GM12878 (cell line): ENCODE measurements at regions of chr17 and their contacts with region 1.

Region 1: DNA sequence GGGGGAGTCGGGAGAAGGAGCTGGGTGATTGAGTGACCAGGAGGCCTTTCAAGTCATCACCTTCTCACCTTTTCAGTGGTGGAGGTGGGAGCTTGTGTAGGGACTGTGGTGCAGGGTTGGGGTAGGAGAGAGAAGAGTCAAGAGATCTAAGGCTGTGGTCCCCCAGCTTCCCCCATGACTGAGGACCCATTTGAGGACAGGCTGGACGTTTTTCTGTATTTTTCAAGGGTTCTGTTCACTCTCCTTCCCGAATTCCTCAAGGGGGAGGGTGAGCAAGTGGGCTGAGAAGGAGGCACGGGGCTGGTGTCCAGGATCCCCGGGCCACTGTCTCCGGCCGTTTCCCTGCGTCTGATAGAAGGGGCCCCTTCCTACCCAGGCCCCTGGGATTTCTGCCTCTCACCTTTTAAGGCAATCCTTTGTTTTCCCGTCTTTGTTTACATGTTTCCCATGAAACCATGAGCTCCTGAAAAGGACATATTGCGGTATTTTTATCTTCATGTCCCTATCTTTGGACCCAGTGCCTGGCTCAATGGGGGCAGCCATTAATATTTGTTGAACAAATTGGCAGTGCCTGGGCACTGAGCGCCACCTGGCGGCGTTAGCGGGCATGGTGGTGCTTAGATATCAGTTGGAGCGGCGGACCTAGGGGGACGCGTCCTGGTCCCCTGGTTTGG is 9.2 kb upstream of the CD300A start:
- DNase-seq: no peak
- ATAC-seq: peak; percentile 61
- H3K4me3 ChIP-seq: no peak overlapping the region
- H3K27ac ChIP-seq: no peak overlapping the region
- H3K4me1 ChIP-seq: peaks cover 16% of the 10 kb centered on the region
- H3K27me3 ChIP-seq: peaks cover 0 to 2% of the 10 kb centered on the region in 2 experiments; a peak in 2 of 4 replicates
- CTCF ChIP-seq: peak; percentile 87 to 96 (median 94)
- EP300 ChIP-seq: no peak
- POLR2A ChIP-seq: no peak
- RAD21 ChIP-seq: peak; percentile 98

Region 2: DNA sequence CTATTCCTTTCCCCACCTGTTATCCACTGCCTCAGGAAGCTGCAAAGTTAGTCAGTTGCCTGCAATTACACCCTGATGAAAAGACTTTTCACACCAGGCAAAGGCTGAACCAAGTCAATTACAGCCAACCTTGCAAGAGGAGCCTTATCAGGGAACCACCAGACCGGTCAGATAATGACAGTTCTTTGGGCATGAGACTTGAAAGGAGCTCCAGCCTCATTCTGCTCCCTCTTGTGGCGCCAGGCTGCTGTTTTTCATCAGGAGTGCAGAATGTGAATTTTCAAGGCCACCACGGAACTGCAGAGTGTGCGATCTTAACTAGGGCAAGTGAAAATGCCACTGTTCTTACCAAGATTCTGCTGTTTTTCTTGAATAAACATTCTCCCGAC is 160.7 kb before region 1 on chr17:
- CTCF ChIA-PET with region 1: interaction called, 7 read pairs
- POLR2A ChIA-PET with region 1: no interaction called
- RAD21 ChIA-PET with region 1: interaction called, 5 read pairs
- SMC1A ChIA-PET with region 1: interaction called, 3 read pairs
- in situ Hi-C with region 1: no loop called
- intact Hi-C with region 1: loop called (anchors 2 kb)
- DNase-seq: no peak
- ATAC-seq: peak; percentile 83
- H3K4me3 ChIP-seq: no peak overlapping the region
- H3K27ac ChIP-seq: no peak overlapping the region
- H3K4me1 ChIP-seq: no peaks in the 10 kb centered on the region
- H3K27me3 ChIP-seq: no peaks in the 10 kb centered on the region
- CTCF ChIP-seq: peak; percentile 43 to 72 (median 56); a peak in 4 of 6 replicates
- EP300 ChIP-seq: no peak
- POLR2A ChIP-seq: no peak
- RAD21 ChIP-seq: peak; percentile 47

Region 3: DNA sequence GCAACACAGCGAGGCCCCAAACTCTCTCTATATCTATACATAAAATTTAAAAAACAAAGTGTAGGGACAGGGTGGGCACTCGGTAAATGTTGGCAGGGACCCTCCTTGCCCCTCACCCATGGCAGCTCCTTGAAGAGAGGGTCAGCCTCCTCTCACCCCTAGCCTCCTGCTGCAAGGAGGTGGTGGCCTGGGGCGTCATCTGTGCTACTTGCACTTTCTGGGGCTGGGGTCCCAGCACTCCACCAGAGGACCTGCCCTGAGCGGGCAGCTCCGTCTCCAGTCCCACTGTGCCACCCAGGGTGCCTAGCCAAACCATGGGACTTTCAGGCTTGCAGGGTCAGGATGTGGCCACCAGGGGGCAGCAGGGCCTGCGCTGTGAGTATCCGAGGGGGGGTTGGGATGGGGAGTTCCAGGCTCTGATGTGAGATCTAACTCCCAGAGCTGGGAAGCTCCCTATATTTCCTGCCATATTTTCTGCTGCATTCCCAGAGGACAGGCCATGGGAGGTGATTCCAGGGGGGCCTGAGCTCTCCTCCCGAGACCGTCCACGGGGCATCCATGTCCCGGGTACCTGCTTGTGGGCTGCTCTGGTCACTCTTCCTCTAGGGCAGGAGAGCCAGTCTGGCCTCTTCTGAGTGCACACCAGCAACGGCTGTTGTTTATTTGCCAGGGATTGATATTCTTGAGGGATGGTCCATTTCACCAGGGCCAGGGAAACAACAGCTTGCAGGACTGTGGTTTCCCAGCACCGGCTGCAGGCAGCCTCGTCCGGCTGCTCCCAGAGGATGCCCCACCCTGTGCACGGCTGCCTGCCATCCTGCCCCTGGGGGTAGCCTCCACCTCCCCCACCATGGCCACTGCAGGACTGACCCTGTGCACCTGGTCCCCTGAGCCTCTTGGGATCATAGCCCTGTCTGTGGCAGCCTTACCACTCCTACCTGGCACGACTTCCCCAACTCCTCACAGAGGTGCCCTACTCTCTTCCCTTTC is 88.9 kb before region 1 on chr17:
- CTCF ChIA-PET with region 1: interaction called, 314 read pairs
- POLR2A ChIA-PET with region 1: interaction called, 3 read pairs
- RAD21 ChIA-PET with region 1: interaction called, 83 read pairs
- SMC1A ChIA-PET with region 1: interaction called, 47 read pairs
- in situ Hi-C with region 1: no loop called
- intact Hi-C with region 1: loop called (anchors 2 kb)
- DNase-seq: no peak
- ATAC-seq: peak; percentile 93
- H3K4me3 ChIP-seq: no peak overlapping the region
- H3K27ac ChIP-seq: no peak overlapping the region
- H3K4me1 ChIP-seq: peaks cover 7% of the 10 kb centered on the region
- H3K27me3 ChIP-seq: no peaks in the 10 kb centered on the region; a peak in 3 of 4 replicates
- CTCF ChIP-seq: peak; percentile 93 to 97 (median 94)
- EP300 ChIP-seq: no peak
- POLR2A ChIP-seq: no peak
- RAD21 ChIP-seq: peak; percentile 73

Region 4: GRCh38 chr17:74379495-74380085 is 77.7 kb before region 1 on chr17:
- CTCF ChIA-PET with region 1: interaction called, 314 read pairs
- POLR2A ChIA-PET with region 1: interaction called, 10 read pairs
- RAD21 ChIA-PET with region 1: no interaction called
- SMC1A ChIA-PET with region 1: interaction called, 18 read pairs
- in situ Hi-C with region 1: no loop called
- intact Hi-C with region 1: loop called (anchors 1 kb)
- DNase-seq: peak; percentile 40
- ATAC-seq: peak; percentile 98
- H3K4me3 ChIP-seq: no peak overlapping the region
- H3K27ac ChIP-seq: no peak overlapping the region
- H3K4me1 ChIP-seq: no peaks in the 10 kb centered on the region
- H3K27me3 ChIP-seq: no peaks in the 10 kb centered on the region
- CTCF ChIP-seq: peak; percentile 81 to 97 (median 94); a peak in 5 of 6 replicates
- EP300 ChIP-seq: no peak
- POLR2A ChIP-seq: no peak
- RAD21 ChIP-seq: peak; percentile 99

Region 5: DNA sequence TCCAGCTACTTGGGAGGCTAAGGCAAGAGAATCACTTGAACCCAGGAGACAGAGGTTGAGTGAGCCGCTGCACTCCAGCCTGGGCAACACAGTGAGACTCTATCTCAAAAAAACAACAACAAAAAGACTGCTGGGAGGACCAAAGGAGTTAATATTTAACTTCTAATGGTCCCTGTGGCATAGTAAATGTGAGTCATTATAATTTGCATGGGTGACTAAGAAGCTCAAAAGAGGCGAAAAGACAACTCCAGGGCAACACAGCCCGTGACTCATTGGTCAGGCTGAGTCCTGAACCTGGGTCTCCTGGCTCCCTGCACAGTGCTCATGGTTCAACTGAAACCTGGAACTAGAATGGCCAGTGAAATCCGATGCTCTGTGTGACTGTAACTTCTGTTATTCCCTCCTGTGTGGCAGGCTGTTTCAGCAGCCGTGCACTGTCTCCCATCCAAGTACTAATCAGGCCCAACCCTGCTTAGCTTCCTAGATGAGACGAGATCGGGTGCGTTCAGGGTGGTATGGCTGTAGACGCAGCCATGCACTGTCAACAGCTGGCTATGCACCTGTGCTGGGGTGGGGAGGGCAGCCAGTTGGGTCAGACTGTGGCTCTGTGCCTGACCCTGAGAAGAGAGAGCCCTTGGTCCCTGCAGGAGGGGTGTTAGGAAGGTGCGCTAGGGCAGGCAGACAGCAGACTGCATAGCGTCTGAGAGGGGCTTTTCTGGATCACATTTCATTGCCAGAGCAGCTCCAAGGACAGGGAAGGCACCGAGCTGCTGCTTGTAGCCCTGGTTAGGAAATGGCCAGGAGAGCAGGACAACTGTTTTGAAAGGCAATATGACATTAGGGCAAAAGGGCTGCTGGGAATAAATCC is 39.9 kb before region 1 on chr17:
- CTCF ChIA-PET with region 1: interaction called, 10 read pairs
- POLR2A ChIA-PET with region 1: no interaction called
- RAD21 ChIA-PET with region 1: interaction called, 5 read pairs
- SMC1A ChIA-PET with region 1: interaction called, 11 read pairs
- in situ Hi-C with region 1: no loop called
- intact Hi-C with region 1: loop called (anchors 5 kb)
- DNase-seq: peak; percentile 56
- ATAC-seq: peak; percentile 96
- H3K4me3 ChIP-seq: no peak overlapping the region
- H3K27ac ChIP-seq: no peak overlapping the region
- H3K4me1 ChIP-seq: peaks cover 4% of the 10 kb centered on the region; the same call in 1 of the 2 replicates
- H3K27me3 ChIP-seq: no peaks in the 10 kb centered on the region
- CTCF ChIP-seq: no peak
- EP300 ChIP-seq: no peak
- POLR2A ChIP-seq: no peak
- RAD21 ChIP-seq: no peak

Region 6: DNA sequence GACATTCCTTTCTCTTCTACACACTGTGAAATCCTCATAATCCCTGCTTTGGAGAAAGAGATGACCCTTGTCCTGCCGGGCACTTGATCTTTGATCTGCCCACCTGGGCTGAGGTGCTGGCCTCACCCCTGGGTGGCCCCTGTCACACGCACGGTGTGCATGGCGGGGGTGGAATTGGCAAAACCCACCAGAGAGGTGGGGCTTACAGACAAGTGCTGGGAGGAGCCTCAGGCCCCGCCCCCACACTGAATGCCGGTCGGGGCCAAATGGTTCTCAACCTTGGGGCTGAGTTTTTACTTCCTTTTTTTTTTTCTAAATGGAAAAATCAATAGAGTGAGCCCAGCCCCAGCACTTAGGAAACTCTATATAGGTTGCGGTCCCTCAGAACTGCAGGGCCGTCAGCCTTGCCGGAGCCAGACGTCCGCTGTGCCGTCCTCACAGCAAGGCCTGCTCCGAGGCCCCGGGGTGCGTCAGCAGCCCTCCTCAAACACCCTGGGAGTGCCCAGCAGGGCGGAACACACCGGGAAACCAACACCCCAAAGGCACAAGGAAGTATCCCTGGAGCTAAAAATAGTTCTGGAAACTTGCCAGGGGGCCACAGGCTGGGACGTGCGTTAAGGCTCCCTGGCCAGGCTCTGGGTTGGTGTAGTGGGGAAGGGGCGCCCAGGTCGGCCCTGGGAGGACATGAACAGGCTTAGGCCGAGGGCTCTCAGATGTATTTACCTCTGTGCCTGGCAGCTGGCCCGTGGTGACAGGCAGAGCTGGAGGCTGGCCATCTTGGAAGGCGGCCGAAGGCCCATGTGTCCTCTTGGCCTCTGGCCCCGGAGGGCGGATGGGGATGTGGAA is 14.4 kb before region 1 on chr17:
- CTCF ChIA-PET with region 1: interaction called, 73 read pairs
- POLR2A ChIA-PET with region 1: no interaction called
- RAD21 ChIA-PET with region 1: interaction called, 7 read pairs
- SMC1A ChIA-PET with region 1: interaction called, 12 read pairs
- in situ Hi-C with region 1: no loop called
- intact Hi-C with region 1: no loop called
- DNase-seq: no peak
- ATAC-seq: peak; percentile 93
- H3K4me3 ChIP-seq: 0 out of 2 replicates have a peak overlapping the region, but pooled peaks have one; percentile 35
- H3K27ac ChIP-seq: no peak overlapping the region
- H3K4me1 ChIP-seq: peaks cover 5% of the 10 kb centered on the region; the same call in 1 of the 2 replicates
- H3K27me3 ChIP-seq: no peaks in the 10 kb centered on the region
- CTCF ChIP-seq: no peak
- EP300 ChIP-seq: no peak
- POLR2A ChIP-seq: no peak
- RAD21 ChIP-seq: no peak

Region 7: GRCh38 chr17:74493381-74493833 is 36.1 kb after region 1 on chr17:
- CTCF ChIA-PET with region 1: interaction called, 13 read pairs
- POLR2A ChIA-PET with region 1: no interaction called
- RAD21 ChIA-PET with region 1: interaction called, 14 read pairs
- SMC1A ChIA-PET with region 1: interaction called, 11 read pairs
- in situ Hi-C with region 1: no loop called
- intact Hi-C with region 1: no loop called
- DNase-seq: peak; percentile 28
- ATAC-seq: peak; percentile 92
- H3K4me3 ChIP-seq: no peak overlapping the region
- H3K27ac ChIP-seq: no peak overlapping the region
- H3K4me1 ChIP-seq: no peaks in the 10 kb centered on the region
- H3K27me3 ChIP-seq: no peaks in the 10 kb centered on the region
- CTCF ChIP-seq: peak; percentile 93 to 95 (median 94); a peak in 5 of 6 replicates
- EP300 ChIP-seq: no peak
- POLR2A ChIP-seq: no peak
- RAD21 ChIP-seq: peak; percentile 98

Region 8: GRCh38 chr17:74545843-74546230 is 88.6 kb after region 1 on chr17 and contains the start of gene CD300C:
- CTCF ChIA-PET with region 1: no interaction called
- POLR2A ChIA-PET with region 1: no interaction called
- RAD21 ChIA-PET with region 1: no interaction called
- SMC1A ChIA-PET with region 1: no interaction called
- in situ Hi-C with region 1: no loop called
- intact Hi-C with region 1: no loop called
- DNase-seq: no peak
- ATAC-seq: peak; percentile 61
- H3K4me3 ChIP-seq: no peak within 1 kb of the TSS
- H3K27ac ChIP-seq: no peak within 1 kb of the TSS
- H3K4me1 ChIP-seq: no peaks in the 10 kb centered on the region
- H3K27me3 ChIP-seq: no peaks in the 10 kb centered on the region; a peak in 1 of 4 replicates
- CTCF ChIP-seq: no peak
- EP300 ChIP-seq: no peak
- POLR2A ChIP-seq: no peak
- RAD21 ChIP-seq: no peak
- polyA plus RNA-seq, gene CD300C: 0.13 TPM in 1 of 2 experiments, not detected in the other

Region 9: GRCh38 chr17:74631468-74632450 is 174.5 kb after region 1 on chr17:
- CTCF ChIA-PET with region 1: no interaction called
- POLR2A ChIA-PET with region 1: no interaction called
- RAD21 ChIA-PET with region 1: no interaction called
- SMC1A ChIA-PET with region 1: no interaction called
- in situ Hi-C with region 1: no loop called
- intact Hi-C with region 1: no loop called
- DNase-seq: peak; percentile 45
- ATAC-seq: 0 out of 3 replicates have a peak, but pooled peaks have one; percentile 38
- H3K4me3 ChIP-seq: no peak overlapping the region
- H3K27ac ChIP-seq: no peak overlapping the region
- H3K4me1 ChIP-seq: peaks cover 25% of the 10 kb centered on the region
- H3K27me3 ChIP-seq: no peaks in the 10 kb centered on the region; a peak in 1 of 4 replicates
- CTCF ChIP-seq: no peak
- EP300 ChIP-seq: no peak
- POLR2A ChIP-seq: no peak
- RAD21 ChIP-seq: no peak